ENCODE measurements at regions of chr5 and their contacts with region 1.

Region 1: DNA sequence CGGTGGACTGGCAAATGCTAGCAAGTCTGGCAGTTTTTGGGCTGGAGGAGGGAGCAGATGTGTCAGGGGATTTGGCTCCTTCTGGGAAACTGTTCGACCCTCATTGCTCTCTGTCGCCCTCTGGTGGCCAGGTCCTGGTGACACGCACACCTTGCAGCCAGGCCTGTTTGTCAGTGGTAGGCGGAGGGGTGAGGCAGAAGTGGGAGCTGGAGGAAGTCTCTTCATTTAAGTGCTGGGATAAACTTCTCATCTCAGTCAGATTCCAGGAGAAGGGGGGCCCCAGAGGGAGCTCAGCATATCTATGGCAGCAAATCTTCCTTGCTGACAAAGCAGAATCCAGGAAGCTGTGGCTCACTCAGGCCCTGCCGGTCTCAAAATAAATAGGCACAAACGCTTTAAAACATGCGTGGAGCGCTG is 326.5 kb downstream of the ZSWIM6 start:
- DNase-seq: peak; percentile 84 to 92 (median 91)
- ATAC-seq: peak; percentile 84 to 89
- H3K4me3 ChIP-seq: no peak overlapping the region
- H3K27ac ChIP-seq: peak overlapping the region; percentile 25
- H3K4me1 ChIP-seq: no peaks in the 10 kb centered on the region
- H3K27me3 ChIP-seq: no peaks in the 10 kb centered on the region

Region 2: DNA sequence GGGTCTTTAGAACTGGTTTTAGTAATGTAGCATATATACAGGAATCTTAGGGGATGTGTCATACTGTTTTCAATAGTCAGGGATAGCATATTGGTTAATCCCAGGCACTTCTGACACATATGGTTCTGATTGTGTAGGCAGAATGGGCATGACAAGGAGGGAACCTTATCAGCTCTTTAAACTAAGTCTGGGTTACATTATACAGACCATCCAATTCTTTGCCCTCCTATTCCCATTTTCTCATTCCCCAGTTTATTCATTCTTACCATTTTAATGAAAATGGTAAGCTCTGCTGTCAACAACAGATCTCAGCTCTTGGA is 628.5 kb before region 1 on chr5:
- intact Hi-C with region 1: no loop called
- DNase-seq: no peak
- ATAC-seq: no peak
- H3K4me3 ChIP-seq: no peak overlapping the region
- H3K27ac ChIP-seq: no peak overlapping the region
- H3K4me1 ChIP-seq: no peaks in the 10 kb centered on the region
- H3K27me3 ChIP-seq: no peaks in the 10 kb centered on the region

Region 3: GRCh38 chr5:61055434-61056006 is 603.1 kb before region 1 on chr5:
- intact Hi-C with region 1: loop called in 2 of 4 experiments (anchors 10 kb)
- DNase-seq: no peak
- ATAC-seq: no peak
- H3K4me3 ChIP-seq: no peak overlapping the region
- H3K27ac ChIP-seq: no peak overlapping the region
- H3K4me1 ChIP-seq: no peaks in the 10 kb centered on the region
- H3K27me3 ChIP-seq: no peaks in the 10 kb centered on the region

Measured in right cardiac atrium (tissue), 5 donors.